IMR-90 (cell line): ENCODE measurements at regions of chr3 and their contacts with region 1.

Region 1: GRCh38 chr3:139916316-139917057 is 18.5 kb upstream of the CLSTN2 start:
- DNase-seq: no peak
- ATAC-seq: no peak
- H3K4me3 ChIP-seq: no peak overlapping the region
- H3K27ac ChIP-seq: no peak overlapping the region
- H3K4me1 ChIP-seq: no peaks in the 10 kb centered on the region
- H3K27me3 ChIP-seq: no peaks in the 10 kb centered on the region
- CTCF ChIP-seq: no peak
- POLR2A ChIP-seq: no peak
- RAD21 ChIP-seq: no peak

Region 2: GRCh38 chr3:140470962-140471361 is 554.5 kb after region 1 on chr3:
- CTCF ChIA-PET with region 1: no interaction called
- POLR2A ChIA-PET with region 1: interaction called, 13 read pairs
- dilution Hi-C with region 1: no loop called
- in situ Hi-C with region 1: no loop called
- intact Hi-C with region 1: no loop called
- DNase-seq: no peak
- ATAC-seq: no peak
- H3K4me3 ChIP-seq: no peak overlapping the region
- H3K27ac ChIP-seq: no peak overlapping the region
- H3K4me1 ChIP-seq: no peaks in the 10 kb centered on the region
- H3K27me3 ChIP-seq: no peaks in the 10 kb centered on the region
- CTCF ChIP-seq: no peak
- POLR2A ChIP-seq: no peak
- RAD21 ChIP-seq: no peak